ENCODE measurements at regions of chr5 and their contacts with region 1.

Region 1: DNA sequence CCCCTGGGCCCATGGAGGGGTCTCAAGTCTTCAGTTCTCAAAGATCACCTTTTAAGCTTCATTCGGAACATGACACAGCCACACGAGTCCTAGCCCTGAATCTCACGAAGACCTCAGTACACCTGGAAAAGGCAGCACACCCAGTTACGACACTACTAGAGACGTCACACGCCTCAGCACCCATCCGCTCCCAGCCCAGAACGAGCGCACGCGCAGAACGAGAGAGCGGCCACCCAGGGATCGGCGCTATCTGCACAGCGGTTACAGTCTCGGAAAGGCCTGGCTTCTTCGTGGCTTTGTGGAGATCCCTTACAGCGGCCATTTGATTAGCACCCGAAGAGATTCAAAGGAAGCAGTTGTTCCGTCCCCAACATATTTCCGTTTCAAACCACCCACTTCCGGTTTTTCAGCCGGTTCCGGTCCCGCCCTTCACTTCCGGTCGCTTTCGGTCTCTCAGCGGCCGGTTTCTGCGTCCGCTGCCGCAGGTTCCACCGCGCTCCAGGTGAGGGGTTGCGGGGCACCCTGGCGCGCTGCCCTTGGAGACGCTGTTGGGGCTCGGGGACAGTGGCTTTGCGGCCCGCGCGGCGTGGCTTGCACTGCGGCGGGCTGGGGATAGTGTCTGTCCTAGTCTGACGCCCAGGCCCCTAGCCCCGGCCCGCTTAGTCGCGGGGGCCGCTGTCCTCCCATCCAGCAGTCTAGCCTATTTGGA is at the start of gene UBLCP1:
- DNase-seq: peak; percentile 82 to 87 (median 86)
- H3K4me3 ChIP-seq: peak within 1 kb of the TSS; percentile 67 to 75
- H3K4me3 Mint-ChIP-seq: peak within 1 kb of the TSS; percentile 98 to 99 (median 98)
- H3K27ac ChIP-seq: peak within 1 kb of the TSS; percentile 89
- H3K27ac Mint-ChIP-seq: peak within 1 kb of the TSS; percentile 96 to 100 (median 99)
- H3K4me1 ChIP-seq: peaks cover 27% of the 10 kb centered on the region
- H3K4me1 Mint-ChIP-seq: peaks cover 34 to 66% (median 46%) of the 10 kb centered on the region in 4 donors
- H3K27me3 ChIP-seq: no peaks in the 10 kb centered on the region
- H3K27me3 Mint-ChIP-seq: no peaks in the 10 kb centered on the region
- total RNA-seq, gene UBLCP1: 31.6 to 33.4 TPM

Region 2: DNA sequence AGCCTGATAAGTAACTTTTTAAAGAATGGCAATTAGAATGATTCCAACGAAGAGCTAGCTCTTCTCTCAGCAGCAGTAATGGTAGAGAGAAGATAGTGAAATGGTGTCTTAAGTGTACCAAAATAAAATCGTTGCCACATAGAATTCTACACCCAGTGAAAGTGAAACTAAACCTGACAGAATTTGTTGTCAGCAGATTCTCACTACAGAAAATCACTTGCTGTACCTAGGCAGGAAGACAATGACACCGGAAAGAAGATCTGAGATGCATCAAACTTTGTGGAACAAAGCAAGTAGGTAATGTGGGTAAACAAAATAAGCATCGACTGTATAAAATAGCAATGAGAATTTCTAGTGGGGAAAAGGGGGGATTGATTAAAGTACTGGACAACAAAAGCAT is 142.6 kb before region 1 on chr5:
- CTCF ChIA-PET with region 1: no interaction called
- POLR2A ChIA-PET with region 1: no interaction called
- intact Hi-C with region 1: no loop called
- DNase-seq: peak in 4 of 5 donors; percentile 52 to 68 (median 60)
- H3K4me3 ChIP-seq: peak overlapping the region in 1 of 2 donors; percentile 29
- H3K4me3 Mint-ChIP-seq: peak overlapping the region; percentile 61 to 89 (median 77)
- H3K27ac ChIP-seq: peak overlapping the region; percentile 30
- H3K27ac Mint-ChIP-seq: peak overlapping the region; percentile 75 to 96 (median 90)
- H3K4me1 ChIP-seq: peaks cover 16% of the 10 kb centered on the region
- H3K4me1 Mint-ChIP-seq: peaks cover 16 to 23% (median 20%) of the 10 kb centered on the region in 4 donors
- H3K27me3 ChIP-seq: no peaks in the 10 kb centered on the region
- H3K27me3 Mint-ChIP-seq: no peaks in the 10 kb centered on the region

Region 3: DNA sequence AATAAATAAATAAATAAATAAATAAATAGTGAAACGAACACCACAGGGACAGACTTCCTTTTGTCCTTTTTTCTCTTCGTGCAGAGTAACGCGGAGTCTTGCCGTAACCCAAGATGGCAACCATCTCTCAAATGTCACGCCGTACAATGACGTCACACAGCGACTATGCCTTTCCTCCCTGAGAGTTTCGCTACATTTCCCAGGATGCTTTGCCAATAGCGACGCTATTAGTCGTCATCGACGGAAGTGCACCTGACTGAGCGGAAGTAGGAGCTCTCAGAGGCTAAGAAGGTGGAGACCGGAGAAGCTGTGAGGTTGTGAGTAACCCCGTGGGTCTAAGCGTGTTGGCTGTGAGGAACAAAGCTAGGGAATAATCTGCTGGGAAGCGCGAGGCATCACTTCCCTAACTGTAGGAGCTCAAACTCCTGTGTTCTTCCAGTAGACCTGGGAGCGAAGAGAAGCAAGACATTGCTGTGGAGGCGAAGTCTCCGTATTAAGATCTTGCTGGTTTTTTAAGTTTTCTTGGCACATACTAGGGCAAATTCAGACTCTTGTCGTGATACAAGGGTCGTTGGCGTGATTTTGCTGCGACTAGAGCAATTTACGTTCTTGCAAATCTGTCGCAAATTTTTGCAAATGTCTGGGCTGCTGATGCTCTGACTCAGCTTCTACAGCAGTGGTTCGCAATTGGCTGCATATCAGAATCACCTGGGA is 746.0 kb after region 1 on chr5 and contains the start of gene TTC1:
- CTCF ChIA-PET with region 1: no interaction called
- POLR2A ChIA-PET with region 1: interaction called, 3 read pairs
- intact Hi-C with region 1: loop called (anchors 10 kb)
- DNase-seq: peak; percentile 89 to 96 (median 94)
- H3K4me3 ChIP-seq: peak within 1 kb of the TSS; percentile 85 to 96
- H3K4me3 Mint-ChIP-seq: peak within 1 kb of the TSS; percentile 94 to 100 (median 96)
- H3K27ac ChIP-seq: peak within 1 kb of the TSS; percentile 76
- H3K27ac Mint-ChIP-seq: peak within 1 kb of the TSS; percentile 88 to 99 (median 98)
- H3K4me1 ChIP-seq: peaks cover 30% of the 10 kb centered on the region
- H3K4me1 Mint-ChIP-seq: peaks cover 24 to 35% (median 29%) of the 10 kb centered on the region in 4 donors
- H3K27me3 ChIP-seq: no peaks in the 10 kb centered on the region
- H3K27me3 Mint-ChIP-seq: no peaks in the 10 kb centered on the region
- total RNA-seq, gene TTC1: 47.5 to 47.9 TPM

Measured in CD4-positive, alpha-beta memory T cell (primary cell).